Caco-2 (cell line): ENCODE measurements at regions of chr10 and their contacts with region 1.

Region 1: DNA sequence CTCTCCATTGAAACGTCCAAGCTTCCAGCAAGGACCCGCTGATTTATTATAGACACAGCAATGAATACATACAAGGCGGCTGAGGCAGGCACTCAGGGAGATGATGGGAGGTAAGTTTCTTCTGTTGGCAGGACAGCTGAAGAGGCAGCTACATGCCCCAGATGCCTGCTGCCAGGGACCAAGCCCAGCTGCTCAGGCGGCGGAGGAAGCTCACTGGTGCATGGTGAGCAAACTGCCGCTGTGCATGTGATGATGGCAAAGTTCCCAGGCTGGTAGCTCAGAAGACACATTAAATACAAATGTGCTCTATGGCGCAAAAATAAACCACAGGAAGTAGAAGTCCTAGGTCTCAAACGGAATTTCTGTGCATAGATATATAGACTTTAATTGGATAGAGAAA is 2.3 kb downstream of the DNTT start:
- DNase-seq: no peak
- H3K4me3 ChIP-seq: no peak overlapping the region
- H3K4me3 Mint-ChIP-seq: no peak overlapping the region
- H3K27ac Mint-ChIP-seq: no peak overlapping the region
- H3K4me1 ChIP-seq: no peaks in the 10 kb centered on the region
- H3K4me1 Mint-ChIP-seq: no peaks in the 10 kb centered on the region
- H3K27me3 ChIP-seq: no peaks in the 10 kb centered on the region
- H3K27me3 Mint-ChIP-seq: no peaks in the 10 kb centered on the region
- CTCF ChIP-seq: no peak

Region 2: DNA sequence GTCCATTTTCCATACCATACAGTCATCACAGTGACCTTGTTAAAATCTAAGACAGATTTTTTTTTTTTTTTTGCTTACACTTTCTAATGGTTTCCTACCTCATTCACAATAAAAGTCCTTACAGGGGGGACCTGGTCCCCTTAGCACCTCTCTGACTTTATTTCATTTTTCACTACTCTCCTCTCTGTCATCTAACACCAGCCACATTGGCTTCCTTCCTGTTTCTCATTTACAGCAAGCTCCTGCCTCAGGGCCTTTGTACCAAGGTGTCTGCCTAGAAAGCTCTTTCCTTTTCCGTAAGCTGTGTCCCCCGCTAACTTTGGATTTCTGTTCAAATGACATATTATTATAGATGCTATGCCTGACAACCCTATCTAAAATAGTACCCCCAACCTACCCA is 371.1 kb before region 1 on chr10:
- CTCF ChIA-PET with region 1: no interaction called
- POLR2A ChIA-PET with region 1: no interaction called
- intact Hi-C with region 1: loop called (anchors 5 kb)
- DNase-seq: no peak
- H3K4me3 ChIP-seq: no peak overlapping the region
- H3K4me3 Mint-ChIP-seq: no peak overlapping the region
- H3K27ac Mint-ChIP-seq: no peak overlapping the region
- H3K4me1 ChIP-seq: no peaks in the 10 kb centered on the region
- H3K4me1 Mint-ChIP-seq: no peaks in the 10 kb centered on the region
- H3K27me3 ChIP-seq: no peaks in the 10 kb centered on the region; the same call in 1 of the 2 replicates
- H3K27me3 Mint-ChIP-seq: peaks cover 9% of the 10 kb centered on the region
- CTCF ChIP-seq: no peak